CD14-positive monocyte (primary cell): ENCODE measurements at regions of chr3 and their contacts with region 1.

Region 1: DNA sequence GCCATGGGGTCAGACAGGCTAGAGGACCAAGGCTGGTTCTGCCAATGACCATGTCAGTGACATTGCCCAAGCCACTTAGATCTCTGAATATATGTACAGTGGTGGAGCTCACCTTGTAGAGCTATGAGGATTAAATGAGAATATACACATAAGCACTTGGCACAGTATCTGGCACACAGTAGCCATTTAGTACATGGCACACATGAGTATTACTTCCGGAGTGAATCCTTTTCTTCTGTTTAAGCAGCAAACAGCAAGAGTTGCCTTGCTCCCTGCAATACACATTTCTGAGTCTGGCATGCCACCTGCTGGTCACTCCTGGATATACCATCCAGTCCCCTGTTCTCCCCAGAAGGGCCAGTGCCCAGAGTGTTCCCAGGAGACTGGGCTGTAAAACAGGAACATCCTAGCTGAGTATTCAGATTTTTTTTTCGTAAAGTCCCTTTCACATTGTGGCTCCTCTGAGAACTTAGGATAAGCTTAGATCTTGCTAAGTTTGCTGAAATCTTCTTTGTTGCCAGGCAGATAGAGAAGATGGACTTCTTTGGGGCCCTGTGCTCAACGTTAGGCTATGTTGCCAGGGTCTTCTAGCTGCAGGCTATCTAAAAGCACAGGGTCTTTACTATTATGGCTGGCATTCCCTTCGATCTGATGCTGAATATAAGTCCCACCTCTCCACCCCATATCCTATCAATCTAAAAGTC is 203.4 kb downstream of the ADAMTS9 start:
- DNase-seq: peak; percentile 4 to 45 (median 25)
- H3K4me3 ChIP-seq: no peak overlapping the region
- H3K4me3 Mint-ChIP-seq: no peak overlapping the region
- H3K27ac ChIP-seq: no peak overlapping the region
- H3K27ac Mint-ChIP-seq: no peak overlapping the region
- H3K4me1 ChIP-seq: no peaks in the 10 kb centered on the region
- H3K4me1 Mint-ChIP-seq: no peaks in the 10 kb centered on the region
- H3K27me3 ChIP-seq: peaks cover 6 to 12% of the 10 kb centered on the region in 2 donors
- H3K27me3 Mint-ChIP-seq: peaks cover 11 to 22% (median 14%) of the 10 kb centered on the region in 3 donors
- CTCF ChIP-seq: peak; percentile 78

Region 2: GRCh38 chr3:64030741-64031140 is 453.7 kb before region 1 on chr3:
- intact Hi-C with region 1: loop called (anchors 5 to 10 kb)
- DNase-seq: peak; percentile 40 to 72 (median 66)
- H3K4me3 ChIP-seq: peak overlapping the region; percentile 1 to 66 (median 22)
- H3K4me3 Mint-ChIP-seq: peak overlapping the region; percentile 82 to 94
- H3K27ac ChIP-seq: no peak overlapping the region
- H3K27ac Mint-ChIP-seq: peak overlapping the region in 1 of 7 donors; percentile 60
- H3K4me1 ChIP-seq: peaks cover 5% of the 10 kb centered on the region in 2 donors
- H3K4me1 Mint-ChIP-seq: peaks cover 6% of the 10 kb centered on the region
- H3K27me3 ChIP-seq: peaks cover 19 to 38% of the 10 kb centered on the region in 2 donors
- H3K27me3 Mint-ChIP-seq: peaks cover 16 to 45% (median 23%) of the 10 kb centered on the region in 3 donors
- CTCF ChIP-seq: peak; percentile 90

Region 3: DNA sequence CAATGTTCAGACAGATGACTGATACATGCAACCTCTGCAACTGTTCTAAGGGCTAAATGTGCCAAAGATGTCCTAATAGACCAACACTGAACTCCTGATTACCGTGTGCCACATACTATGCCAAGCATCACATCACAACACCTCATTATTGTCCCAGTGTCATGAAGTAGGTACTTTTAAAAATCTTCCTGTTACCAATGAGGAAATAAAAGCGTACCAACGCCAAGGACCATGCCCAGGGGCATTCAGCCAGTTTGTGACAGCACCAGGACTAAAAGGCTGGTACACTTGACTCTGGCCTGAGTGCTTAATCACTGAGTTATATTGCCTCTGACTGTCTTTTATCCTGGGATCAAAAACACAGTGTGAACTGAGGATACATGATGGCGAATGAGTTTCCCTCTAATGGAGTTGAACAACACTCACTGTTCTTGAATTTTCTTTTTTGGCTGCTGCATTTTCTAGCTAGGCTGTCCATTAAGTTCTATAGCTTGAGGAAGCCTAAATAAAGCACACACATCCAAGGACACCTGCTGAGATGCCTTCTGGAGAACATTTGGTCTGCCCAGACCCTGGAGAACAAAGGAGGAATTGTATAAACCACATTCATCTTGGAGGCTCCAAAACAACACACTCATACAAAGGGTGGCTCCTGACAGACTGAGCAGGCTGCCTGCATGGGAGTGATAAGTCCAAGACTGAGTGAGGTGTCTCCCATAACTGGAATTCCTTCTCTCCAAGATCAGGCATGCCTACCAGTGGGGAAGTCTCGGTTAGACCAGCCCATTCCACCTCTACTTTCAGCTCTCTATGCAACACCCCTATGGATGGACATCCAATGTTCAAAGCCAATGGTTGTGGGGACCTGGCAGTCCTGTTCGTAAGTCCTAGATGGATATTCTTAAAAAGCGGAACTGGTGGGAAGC is 132.5 kb before region 1 on chr3:
- intact Hi-C with region 1: no loop called
- DNase-seq: no peak
- H3K4me3 ChIP-seq: no peak overlapping the region
- H3K4me3 Mint-ChIP-seq: no peak overlapping the region
- H3K27ac ChIP-seq: no peak overlapping the region
- H3K27ac Mint-ChIP-seq: no peak overlapping the region
- H3K4me1 ChIP-seq: no peaks in the 10 kb centered on the region
- H3K4me1 Mint-ChIP-seq: peaks cover 9% of the 10 kb centered on the region
- H3K27me3 ChIP-seq: no peaks in the 10 kb centered on the region
- H3K27me3 Mint-ChIP-seq: peaks cover 2 to 13% (median 4%) of the 10 kb centered on the region in 3 donors
- CTCF ChIP-seq: no peak